ENCODE measurements at regions of chr20 and their contacts with region 1.

Region 1: DNA sequence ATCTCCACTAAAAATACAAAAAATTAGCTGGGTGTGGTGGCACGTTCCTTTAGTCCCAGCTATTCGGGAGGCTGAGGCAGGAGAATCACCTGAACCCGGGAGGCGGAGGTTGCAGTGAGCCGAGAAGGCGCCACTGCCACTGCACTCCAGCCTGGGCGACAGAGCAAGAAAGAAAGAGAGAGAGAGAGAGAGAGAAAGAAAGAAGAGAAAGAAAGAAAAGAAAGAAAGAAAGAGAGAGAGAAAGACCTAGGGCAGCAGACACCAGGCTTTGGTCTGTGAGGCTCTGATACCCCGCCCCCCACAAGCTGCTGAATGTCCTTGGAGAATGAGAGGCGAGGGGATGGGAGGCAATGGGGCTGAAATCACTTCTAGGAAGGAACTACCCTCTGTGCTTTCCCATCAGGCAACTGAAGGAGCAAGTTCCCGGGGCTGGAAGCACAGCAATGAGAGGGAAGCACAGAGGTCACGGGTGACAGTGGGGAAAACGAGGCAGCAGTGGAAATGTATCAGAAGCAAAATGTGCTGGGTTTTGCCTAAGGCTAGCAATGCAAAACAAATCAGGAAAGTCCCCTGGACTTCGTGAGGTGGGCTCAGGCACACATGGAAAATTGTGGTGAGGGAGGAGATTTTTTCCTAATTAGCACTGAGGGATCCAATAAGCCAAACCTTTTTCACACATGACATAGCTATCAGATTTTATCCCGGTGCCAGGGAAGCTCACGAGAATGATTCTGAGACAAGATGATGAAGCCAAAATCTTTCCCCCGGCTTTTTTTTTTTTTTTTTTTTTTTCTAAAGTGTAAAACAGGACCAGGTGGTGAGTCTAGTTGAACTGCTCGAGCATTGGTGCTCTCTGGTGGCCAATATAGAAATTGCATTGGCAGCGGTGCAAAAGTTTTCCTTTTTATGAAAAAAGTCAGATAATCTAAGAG is 16.9 kb upstream of the ARFGEF2 start:
- ATAC-seq: peak; percentile 47 to 77 (median 59)
- H3K4me3 ChIP-seq: no peak overlapping the region
- H3K27ac ChIP-seq: no peak overlapping the region
- H3K4me1 ChIP-seq: peaks cover 5 to 6% of the 10 kb centered on the region in 2 donors

Region 2: DNA sequence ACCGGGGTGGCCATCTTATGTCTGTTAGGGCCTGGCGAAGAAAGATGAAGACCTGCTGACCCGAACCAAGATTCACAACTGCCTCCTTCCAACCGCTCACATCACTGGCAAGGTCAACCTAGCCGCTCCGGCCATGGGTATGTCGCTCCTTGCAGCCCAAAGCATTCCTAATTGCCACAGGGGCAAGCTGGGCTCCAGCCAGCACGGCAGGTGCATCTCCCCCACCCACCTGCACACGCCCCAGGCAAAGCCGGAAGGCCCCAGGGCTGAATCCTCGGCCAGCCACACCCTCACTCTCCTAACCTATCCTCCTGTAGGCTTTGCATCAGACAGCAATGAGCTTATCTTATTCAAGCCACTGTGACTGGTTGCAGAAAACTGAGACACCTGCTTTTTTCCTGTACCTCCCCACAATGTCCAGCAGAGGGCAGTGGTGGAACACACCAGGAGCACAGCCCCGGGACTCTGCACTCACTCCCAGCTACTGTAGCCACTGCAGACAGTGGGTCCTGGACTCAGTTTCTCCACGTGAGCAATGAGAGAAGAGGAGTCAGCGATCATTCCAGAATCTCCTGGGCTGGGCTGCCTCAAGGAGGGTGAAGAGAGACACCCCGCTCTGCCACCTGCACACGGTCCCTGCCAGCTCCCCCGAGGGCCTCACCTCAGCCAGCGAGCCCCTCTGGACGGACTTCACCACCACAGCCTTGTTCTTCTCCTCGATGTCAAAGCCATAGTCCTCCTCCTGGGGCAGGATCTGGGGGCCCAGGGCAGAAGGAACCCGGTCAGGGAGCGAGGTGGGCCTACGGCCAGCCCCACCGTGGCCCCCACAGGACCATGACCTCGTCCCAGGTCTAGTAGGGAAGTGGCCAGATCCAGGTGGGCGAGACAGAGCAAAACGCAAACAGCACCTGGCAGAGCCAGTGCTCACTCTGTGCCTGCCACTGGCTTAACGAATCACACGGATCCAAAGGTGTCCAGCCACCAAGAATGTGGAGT is 246.9 kb before region 1 on chr20:
- in situ Hi-C with region 1: loop called in 8 of 9 experiments (anchors 5 to 25 kb)
- ATAC-seq: peak; percentile 79 to 93 (median 84)
- H3K4me3 ChIP-seq: no peak overlapping the region
- H3K27ac ChIP-seq: no peak overlapping the region
- H3K4me1 ChIP-seq: no peaks in the 10 kb centered on the region

Measured in motor neuron (in vitro differentiated cells).